ENCODE measurements at regions of chr12 and their contacts with region 1.

Region 1: GRCh38 chr12:49347384-49348237 is 923 bp downstream of the DNAJC22 start:
- H3K4me3 ChIP-seq: peak overlapping the region; percentile 32
- H3K27ac ChIP-seq: peak overlapping the region; percentile 80; the same call in 1 of the 2 replicates
- H3K4me1 ChIP-seq: peaks cover 21% of the 10 kb centered on the region
- CTCF ChIP-seq: peak; percentile 97

Region 2: GRCh38 chr12:49336645-49337584 is 10.7 kb before region 1 on chr12 and contains the start of gene C1QL4:
- CTCF ChIA-PET with region 1: interaction called, 92 read pairs
- POLR2A ChIA-PET with region 1: interaction called, 14 read pairs
- H3K4me3 ChIP-seq: peak within 1 kb of the TSS; percentile 49
- H3K27ac ChIP-seq: no peak within 1 kb of the TSS; the same call in 1 of the 2 replicates
- H3K4me1 ChIP-seq: peaks cover 9% of the 10 kb centered on the region; the same call in 1 of the 2 replicates
- CTCF ChIP-seq: peak; percentile 85